Mammary epithelial cell (primary cell): ENCODE measurements at regions of chr5 and their contacts with region 1.

Region 1: DNA sequence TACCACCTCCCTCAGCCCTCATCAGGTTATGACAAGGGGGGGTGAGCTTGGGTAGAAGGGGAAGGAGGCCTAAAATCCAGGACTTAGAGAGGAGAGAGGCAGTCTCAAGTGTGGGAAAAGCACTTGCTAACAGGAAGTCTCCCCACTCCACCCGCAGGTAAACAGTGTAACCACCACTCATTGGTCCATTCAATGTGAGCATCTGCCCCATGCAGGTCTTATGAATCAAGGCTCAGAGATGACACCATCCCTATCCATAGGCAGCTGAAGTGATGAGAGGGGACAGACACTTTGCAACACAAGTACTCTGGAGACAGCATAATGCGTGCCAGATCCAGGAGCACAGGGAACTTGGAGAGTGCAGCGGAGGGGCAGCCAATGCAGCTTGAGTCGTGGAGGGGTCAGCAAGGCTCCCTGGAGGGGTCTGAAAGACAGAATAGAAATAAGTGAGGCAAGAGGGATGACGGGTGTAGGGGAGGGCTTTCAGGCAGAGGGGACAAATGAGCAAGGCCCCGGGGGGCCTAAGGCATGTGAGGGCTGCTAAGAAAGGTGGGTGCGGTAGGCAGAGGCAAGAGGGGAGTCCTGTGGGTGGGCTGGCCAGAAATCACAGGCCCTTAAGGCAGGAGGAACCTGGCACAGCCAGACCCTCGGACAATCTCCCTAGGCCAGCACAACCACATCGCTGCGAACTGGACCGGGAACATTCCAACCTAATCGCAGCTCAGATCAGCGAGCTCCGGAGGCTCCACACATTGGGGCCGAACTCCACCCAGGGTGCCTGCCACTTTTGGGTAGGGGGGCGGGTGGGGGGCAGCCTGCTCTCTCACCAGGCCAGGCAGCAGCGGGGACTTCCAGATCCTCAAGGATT is 23.0 kb upstream of the CYSTM1 start:
- DNase-seq: no peak
- H3K4me3 ChIP-seq: no peak overlapping the region
- H3K27ac ChIP-seq: no peak overlapping the region
- H3K4me1 ChIP-seq: peaks cover 4% of the 10 kb centered on the region
- H3K27me3 ChIP-seq: no peaks in the 10 kb centered on the region
- CTCF ChIP-seq: no peak

Region 2: DNA sequence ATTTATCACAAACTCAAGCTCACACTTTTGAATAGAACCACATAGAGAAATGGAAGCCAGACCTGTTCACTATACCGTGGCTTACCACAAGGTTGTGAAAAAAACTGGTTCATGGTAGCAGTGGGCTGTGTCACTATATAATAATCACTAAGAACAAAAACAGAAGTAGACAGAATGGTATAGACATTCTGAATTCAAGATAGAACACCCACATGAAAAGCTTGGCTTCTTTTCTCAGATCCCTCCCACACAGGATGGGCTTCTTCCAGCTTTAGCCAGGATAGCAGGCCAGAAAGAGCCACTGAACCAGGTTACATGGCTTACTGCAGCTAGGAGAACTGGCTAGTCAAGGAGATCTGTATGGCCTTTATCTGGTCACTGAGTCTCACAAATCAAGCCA is 102.8 kb before region 1 on chr5:
- CTCF ChIA-PET with region 1: no interaction called
- dilution Hi-C with region 1: loop called (anchors 5 kb)
- in situ Hi-C with region 1: no loop called
- intact Hi-C with region 1: no loop called
- DNase-seq: no peak
- H3K4me3 ChIP-seq: no peak overlapping the region
- H3K27ac ChIP-seq: no peak overlapping the region
- H3K4me1 ChIP-seq: no peaks in the 10 kb centered on the region
- H3K27me3 ChIP-seq: no peaks in the 10 kb centered on the region
- CTCF ChIP-seq: no peak

Region 3: DNA sequence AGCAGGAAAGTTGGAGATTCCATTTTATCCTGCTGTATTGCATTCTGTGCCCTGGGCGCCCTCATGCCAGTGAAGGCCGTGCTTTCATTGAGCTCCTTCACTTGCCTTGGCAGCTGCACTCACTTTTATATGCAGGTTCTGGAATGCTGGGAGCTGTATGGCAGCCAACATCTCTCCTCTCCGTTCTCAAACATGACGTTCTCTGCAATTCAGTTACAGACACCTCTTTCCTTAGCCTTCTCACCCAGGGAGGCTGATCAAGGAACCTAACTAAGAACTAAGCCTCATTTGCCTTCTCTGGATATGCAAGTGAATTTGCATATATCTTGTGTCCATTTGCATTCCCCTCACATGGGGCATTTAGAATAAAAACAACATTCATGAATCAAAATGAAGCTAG is 67.4 kb before region 1 on chr5:
- CTCF ChIA-PET with region 1: interaction called, 16 read pairs
- dilution Hi-C with region 1: no loop called
- in situ Hi-C with region 1: loop called in 1 of 2 experiments (anchors 5 kb)
- intact Hi-C with region 1: no loop called
- DNase-seq: no peak
- H3K4me3 ChIP-seq: no peak overlapping the region
- H3K27ac ChIP-seq: no peak overlapping the region
- H3K4me1 ChIP-seq: no peaks in the 10 kb centered on the region
- H3K27me3 ChIP-seq: peaks cover 5% of the 10 kb centered on the region
- CTCF ChIP-seq: no peak

Region 4: DNA sequence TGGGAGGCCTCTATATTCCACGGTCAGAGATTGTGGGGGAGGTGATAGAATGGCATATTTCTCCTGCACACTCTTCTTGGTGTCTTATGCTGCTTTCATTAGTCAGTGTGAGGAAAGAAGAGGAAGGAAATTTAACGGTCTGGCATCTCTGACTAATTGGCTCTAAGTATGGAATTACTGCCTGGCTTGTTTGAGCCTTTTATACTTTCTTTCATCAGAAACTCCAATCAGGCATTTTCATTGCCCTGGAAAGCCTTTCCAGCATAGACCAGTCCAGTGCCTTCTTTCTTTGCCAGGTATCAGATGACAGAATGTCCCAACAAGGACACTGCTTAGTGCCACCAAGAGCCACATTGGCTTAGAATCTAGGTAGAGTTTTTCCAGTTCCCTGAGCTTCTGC is 53.3 kb after region 1 on chr5:
- CTCF ChIA-PET with region 1: no interaction called
- dilution Hi-C with region 1: no loop called
- in situ Hi-C with region 1: no loop called
- intact Hi-C with region 1: no loop called
- DNase-seq: no peak
- H3K4me3 ChIP-seq: no peak overlapping the region
- H3K27ac ChIP-seq: no peak overlapping the region
- H3K4me1 ChIP-seq: no peaks in the 10 kb centered on the region
- H3K27me3 ChIP-seq: no peaks in the 10 kb centered on the region
- CTCF ChIP-seq: no peak